Activated CD8-positive, alpha-beta T cell treated with anti-CD3 and anti-CD28 coated beads for 36 hours (primary cell): ENCODE measurements at regions of chr9 and their contacts with region 1.

Region 1: DNA sequence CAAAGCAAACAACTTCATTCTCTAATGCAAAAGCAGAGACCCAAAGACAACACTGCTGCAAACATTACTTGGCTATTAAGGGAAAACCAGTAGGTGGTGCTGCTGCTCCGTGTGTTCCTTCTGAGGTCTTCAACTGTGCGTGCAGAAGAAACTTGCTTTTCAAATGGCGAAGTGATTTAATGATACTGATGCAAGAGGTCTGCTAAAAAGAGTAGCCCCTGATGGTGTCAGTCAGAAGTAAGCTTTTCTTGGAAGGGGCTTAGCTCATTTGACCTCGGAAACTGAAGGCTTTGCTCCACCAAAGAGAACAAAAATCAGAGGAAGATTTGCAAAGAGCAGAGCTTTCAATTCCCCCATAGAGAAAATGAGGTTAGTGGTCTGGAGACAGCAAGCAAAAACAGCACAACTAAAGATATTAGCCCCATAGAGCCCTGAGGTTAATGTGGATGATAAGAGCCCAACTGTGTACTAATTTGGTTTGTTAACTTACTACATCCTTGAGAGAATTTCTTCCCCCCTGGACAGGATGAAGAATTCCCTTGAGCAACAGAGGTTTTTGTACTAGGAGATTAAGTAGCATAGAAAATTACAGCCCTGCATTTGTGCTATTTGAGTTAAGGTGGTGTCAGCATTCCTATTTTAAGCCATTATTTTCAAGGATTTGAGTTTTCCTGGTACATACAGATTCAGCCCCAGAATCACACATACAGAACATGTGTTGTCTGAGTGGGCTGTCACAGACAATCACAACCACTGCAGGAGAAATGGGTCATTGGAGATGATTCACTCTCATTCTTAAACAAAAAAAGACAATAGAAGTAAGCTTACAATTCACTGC is 153.2 kb upstream of the C9orf72 start:
- DNase-seq: peak; percentile 74
- ATAC-seq: peak; percentile 61
- H3K4me3 Mint-ChIP-seq: no peak overlapping the region
- H3K27ac Mint-ChIP-seq: no peak overlapping the region
- H3K4me1 Mint-ChIP-seq: peaks cover 3% of the 10 kb centered on the region
- H3K27me3 Mint-ChIP-seq: peaks cover 2% of the 10 kb centered on the region
- CTCF ChIP-seq: peak; percentile 79

Region 2: GRCh38 chr9:27485158-27485557 is 241.3 kb before region 1 on chr9:
- CTCF ChIA-PET with region 1: no interaction called
- POLR2A ChIA-PET with region 1: no interaction called
- intact Hi-C with region 1: no loop called
- DNase-seq: peak; percentile 9
- ATAC-seq: peak; percentile 67
- H3K4me3 Mint-ChIP-seq: no peak overlapping the region
- H3K27ac Mint-ChIP-seq: peak overlapping the region; percentile 2
- H3K4me1 Mint-ChIP-seq: peaks cover 24% of the 10 kb centered on the region
- H3K27me3 Mint-ChIP-seq: no peaks in the 10 kb centered on the region
- CTCF ChIP-seq: no peak

Region 3: GRCh38 chr9:27514551-27514950 is 211.9 kb before region 1 on chr9:
- CTCF ChIA-PET with region 1: no interaction called
- POLR2A ChIA-PET with region 1: no interaction called
- intact Hi-C with region 1: no loop called
- DNase-seq: no peak
- ATAC-seq: no peak
- H3K4me3 Mint-ChIP-seq: no peak overlapping the region
- H3K27ac Mint-ChIP-seq: no peak overlapping the region
- H3K4me1 Mint-ChIP-seq: no peaks in the 10 kb centered on the region
- H3K27me3 Mint-ChIP-seq: no peaks in the 10 kb centered on the region
- CTCF ChIP-seq: no peak

Region 4: GRCh38 chr9:27755846-27756245 is 29.4 kb after region 1 on chr9:
- CTCF ChIA-PET with region 1: no interaction called
- POLR2A ChIA-PET with region 1: no interaction called
- intact Hi-C with region 1: no loop called
- DNase-seq: no peak
- ATAC-seq: no peak
- H3K4me3 Mint-ChIP-seq: no peak overlapping the region
- H3K27ac Mint-ChIP-seq: no peak overlapping the region
- H3K4me1 Mint-ChIP-seq: no peaks in the 10 kb centered on the region
- H3K27me3 Mint-ChIP-seq: peaks cover 1% of the 10 kb centered on the region
- CTCF ChIP-seq: no peak

Region 5: GRCh38 chr9:27847818-27848217 is 121.4 kb after region 1 on chr9:
- CTCF ChIA-PET with region 1: no interaction called
- POLR2A ChIA-PET with region 1: no interaction called
- intact Hi-C with region 1: no loop called
- DNase-seq: no peak
- ATAC-seq: no peak
- H3K4me3 Mint-ChIP-seq: no peak overlapping the region
- H3K27ac Mint-ChIP-seq: no peak overlapping the region
- H3K4me1 Mint-ChIP-seq: no peaks in the 10 kb centered on the region
- H3K27me3 Mint-ChIP-seq: peaks cover 6% of the 10 kb centered on the region
- CTCF ChIP-seq: no peak

Region 6: GRCh38 chr9:28073270-28073669 is 346.8 kb after region 1 on chr9:
- CTCF ChIA-PET with region 1: interaction called, 4 read pairs
- POLR2A ChIA-PET with region 1: interaction called, 3 read pairs
- intact Hi-C with region 1: loop called (anchors 5 kb)
- DNase-seq: peak; percentile 5
- ATAC-seq: no peak
- H3K4me3 Mint-ChIP-seq: no peak overlapping the region
- H3K27ac Mint-ChIP-seq: no peak overlapping the region
- H3K4me1 Mint-ChIP-seq: no peaks in the 10 kb centered on the region
- H3K27me3 Mint-ChIP-seq: no peaks in the 10 kb centered on the region
- CTCF ChIP-seq: no peak